Ovary (tissue), 10 donors: ENCODE measurements at regions of chr17 and their contacts with region 1.

Region 1: DNA sequence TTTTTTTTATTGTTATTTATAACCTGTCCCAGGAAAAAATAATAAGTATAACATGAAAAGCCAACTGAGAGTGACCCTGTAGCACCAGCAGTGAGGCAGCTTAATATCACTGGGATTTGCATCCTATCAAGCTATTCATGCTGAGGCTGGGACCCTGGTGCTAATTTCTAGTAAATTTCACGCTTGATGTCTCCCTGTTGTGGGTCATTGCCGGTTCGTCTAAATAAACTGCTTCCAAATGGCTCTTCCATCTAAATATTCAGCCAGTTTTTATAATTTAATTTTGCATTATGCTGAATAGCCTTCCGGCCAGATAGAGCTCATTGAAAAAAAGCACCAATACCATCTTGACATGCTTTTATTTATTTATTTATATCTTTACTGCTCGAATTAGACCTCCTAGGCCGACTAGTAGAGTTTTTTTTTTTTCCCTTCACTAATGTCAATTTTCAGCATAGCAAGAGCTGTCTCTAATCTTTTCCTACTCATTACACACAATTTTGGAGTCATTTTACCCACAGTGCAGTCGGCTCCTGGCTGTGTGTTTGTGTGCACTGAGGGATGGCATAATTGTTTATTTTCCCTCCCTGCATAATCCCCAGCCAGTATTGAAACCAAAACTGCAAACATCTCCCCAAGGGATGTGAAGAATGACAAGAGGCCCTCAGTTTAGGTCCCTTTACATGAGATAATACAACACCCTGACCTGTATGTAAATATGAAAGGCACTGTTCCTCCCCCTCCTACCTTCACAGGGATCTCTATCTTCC is 168.8 kb downstream of the AATF start:
- DNase-seq: no peak
- H3K4me3 ChIP-seq: no peak overlapping the region
- H3K27ac ChIP-seq: no peak overlapping the region
- H3K4me1 ChIP-seq: peaks cover 2% of the 10 kb centered on the region
- H3K27me3 ChIP-seq: no peaks in the 10 kb centered on the region
- CTCF ChIP-seq: no peak
- EP300 ChIP-seq: no peak
- POLR2A ChIP-seq: no peak

Region 2: GRCh38 chr17:37147301-37147812 is 29.8 kb after region 1 on chr17:
- intact Hi-C with region 1: loop called in 1 of 4 experiments (anchors 2 kb)
- DNase-seq: no peak
- H3K4me3 ChIP-seq: no peak overlapping the region
- H3K27ac ChIP-seq: no peak overlapping the region
- H3K4me1 ChIP-seq: no peaks in the 10 kb centered on the region
- H3K27me3 ChIP-seq: no peaks in the 10 kb centered on the region
- CTCF ChIP-seq: no peak
- EP300 ChIP-seq: no peak
- POLR2A ChIP-seq: no peak